H1 (cell line): ENCODE measurements at regions of chr12 and their contacts with region 1.

Region 1: GRCh38 chr12:12266873-12267741 is at the start of gene LRP6:
- DNase-seq: peak; percentile 65 to 94
- H3K4me3 ChIP-seq: peak within 1 kb of the TSS; percentile 92 to 97 (median 96)
- H3K27ac ChIP-seq: peak within 1 kb of the TSS; percentile 100
- H3K4me1 ChIP-seq: peaks cover 0 to 5% (median 1%) of the 10 kb centered on the region in 4 experiments; a peak in 4 of 7 replicates
- H3K27me3 ChIP-seq: no peaks in the 10 kb centered on the region
- CTCF ChIP-seq: no peak
- EP300 ChIP-seq: peak in 1 of 2 experiments; percentile 11; a peak in 1 of 3 replicates
- POLR2A ChIP-seq: peak; percentile 84 to 92
- RAD21 ChIP-seq: peak in 1 of 2 experiments; percentile 22; a peak in 1 of 4 replicates
- total RNA-seq, gene LRP6: 73.2 and 74.0 TPM in 2 replicates

Region 2: GRCh38 chr12:12086973-12087692 is 180.0 kb before region 1 on chr12:
- CTCF ChIA-PET with region 1: no interaction called
- POLR2A ChIA-PET with region 1: interaction called, 11 read pairs
- DNase-seq: peak in 1 of 2 experiments; percentile 25
- H3K4me3 ChIP-seq: peak overlapping the region in 1 of 4 experiments; percentile 23; a peak in 3 of 8 replicates
- H3K27ac ChIP-seq: peak overlapping the region; percentile 41; the same call in 1 of the 2 replicates
- H3K4me1 ChIP-seq: peaks cover 13 to 18% (median 16%) of the 10 kb centered on the region in 4 experiments
- H3K27me3 ChIP-seq: peaks cover 0 to 2% (median 0%) of the 10 kb centered on the region in 4 experiments; a peak in 1 of 7 replicates
- CTCF ChIP-seq: no peak
- EP300 ChIP-seq: no peak
- POLR2A ChIP-seq: no peak
- RAD21 ChIP-seq: no peak

Region 3: GRCh38 chr12:12254553-12254952 is 12.6 kb before region 1 on chr12:
- CTCF ChIA-PET with region 1: interaction called, 3 read pairs
- POLR2A ChIA-PET with region 1: interaction called, 31 read pairs
- DNase-seq: no peak
- H3K4me3 ChIP-seq: no peak overlapping the region
- H3K27ac ChIP-seq: no peak overlapping the region
- H3K4me1 ChIP-seq: no peaks in the 10 kb centered on the region; a peak in 1 of 7 replicates
- H3K27me3 ChIP-seq: no peaks in the 10 kb centered on the region
- CTCF ChIP-seq: no peak
- EP300 ChIP-seq: no peak
- POLR2A ChIP-seq: no peak
- RAD21 ChIP-seq: no peak

Region 4: GRCh38 chr12:12305568-12306300 is 38.6 kb after region 1 on chr12:
- CTCF ChIA-PET with region 1: no interaction called
- POLR2A ChIA-PET with region 1: interaction called, 17 read pairs
- DNase-seq: no peak
- H3K4me3 ChIP-seq: no peak overlapping the region
- H3K27ac ChIP-seq: no peak overlapping the region
- H3K4me1 ChIP-seq: no peaks in the 10 kb centered on the region
- H3K27me3 ChIP-seq: no peaks in the 10 kb centered on the region
- CTCF ChIP-seq: no peak
- EP300 ChIP-seq: no peak
- POLR2A ChIP-seq: no peak
- RAD21 ChIP-seq: no peak

Region 5: GRCh38 chr12:12334367-12335040 is 67.4 kb after region 1 on chr12:
- CTCF ChIA-PET with region 1: interaction called, 12 read pairs
- POLR2A ChIA-PET with region 1: interaction called, 19 read pairs
- DNase-seq: peak in 1 of 2 experiments; percentile 69
- H3K4me3 ChIP-seq: no peak overlapping the region
- H3K27ac ChIP-seq: no peak overlapping the region
- H3K4me1 ChIP-seq: peaks cover 4 to 11% (median 9%) of the 10 kb centered on the region in 4 experiments; a peak in 4 of 7 replicates
- H3K27me3 ChIP-seq: no peaks in the 10 kb centered on the region
- CTCF ChIP-seq: peak; percentile 82 to 87 (median 85)
- EP300 ChIP-seq: no peak
- POLR2A ChIP-seq: no peak
- RAD21 ChIP-seq: peak; percentile 77 to 80

Region 6: GRCh38 chr12:12356886-12357718 is 90.0 kb after region 1 on chr12 and contains the start of gene BORCS5:
- CTCF ChIA-PET with region 1: no interaction called
- POLR2A ChIA-PET with region 1: interaction called, 10 read pairs
- DNase-seq: peak; percentile 96 to 97
- H3K4me3 ChIP-seq: peak within 1 kb of the TSS; percentile 68 to 86 (median 83)
- H3K27ac ChIP-seq: peak within 1 kb of the TSS; percentile 62
- H3K4me1 ChIP-seq: peaks cover 0 to 6% (median 2%) of the 10 kb centered on the region in 4 experiments; a peak in 3 of 7 replicates
- H3K27me3 ChIP-seq: no peaks in the 10 kb centered on the region
- CTCF ChIP-seq: peak; percentile 17 to 25 (median 20); a peak in 3 of 4 replicates
- EP300 ChIP-seq: no peak; a peak in 1 of 3 replicates
- POLR2A ChIP-seq: peak; percentile 89 to 97
- RAD21 ChIP-seq: peak; percentile 19 to 28; a peak in 1 of 4 replicates
- total RNA-seq, gene BORCS5: 15.4 and 17.4 TPM in 2 replicates